CD8-positive, alpha-beta T cell (primary cell): ENCODE measurements at regions of chr1 and their contacts with region 1.

Region 1: GRCh38 chr1:196861429-196861828 is 26.4 kb upstream of the CFHR4 start:
- DNase-seq: no peak
- ATAC-seq: no peak
- H3K4me3 ChIP-seq: no peak overlapping the region
- H3K4me3 Mint-ChIP-seq: no peak overlapping the region
- H3K27ac ChIP-seq: no peak overlapping the region
- H3K27ac Mint-ChIP-seq: no peak overlapping the region
- H3K4me1 ChIP-seq: no peaks in the 10 kb centered on the region
- H3K4me1 Mint-ChIP-seq: no peaks in the 10 kb centered on the region
- H3K27me3 ChIP-seq: no peaks in the 10 kb centered on the region
- H3K27me3 Mint-ChIP-seq: peaks cover 4% of the 10 kb centered on the region
- CTCF ChIP-seq: no peak

Region 2: GRCh38 chr1:196738730-196739129 is 122.7 kb before region 1 on chr1:
- CTCF ChIA-PET with region 1: no interaction called
- POLR2A ChIA-PET with region 1: no interaction called
- intact Hi-C with region 1: loop called in 1 of 2 experiments (anchors 10 kb)
- DNase-seq: no peak
- ATAC-seq: no peak
- H3K4me3 ChIP-seq: no peak overlapping the region
- H3K4me3 Mint-ChIP-seq: no peak overlapping the region
- H3K27ac ChIP-seq: no peak overlapping the region
- H3K27ac Mint-ChIP-seq: no peak overlapping the region
- H3K4me1 ChIP-seq: no peaks in the 10 kb centered on the region
- H3K4me1 Mint-ChIP-seq: no peaks in the 10 kb centered on the region
- H3K27me3 ChIP-seq: no peaks in the 10 kb centered on the region
- H3K27me3 Mint-ChIP-seq: no peaks in the 10 kb centered on the region
- CTCF ChIP-seq: no peak